Activated B cell treated with CpG ODN at 0.5 μM for 24 hours (primary cell): ENCODE measurements at regions of chr3 and their contacts with region 1.

Region 1: DNA sequence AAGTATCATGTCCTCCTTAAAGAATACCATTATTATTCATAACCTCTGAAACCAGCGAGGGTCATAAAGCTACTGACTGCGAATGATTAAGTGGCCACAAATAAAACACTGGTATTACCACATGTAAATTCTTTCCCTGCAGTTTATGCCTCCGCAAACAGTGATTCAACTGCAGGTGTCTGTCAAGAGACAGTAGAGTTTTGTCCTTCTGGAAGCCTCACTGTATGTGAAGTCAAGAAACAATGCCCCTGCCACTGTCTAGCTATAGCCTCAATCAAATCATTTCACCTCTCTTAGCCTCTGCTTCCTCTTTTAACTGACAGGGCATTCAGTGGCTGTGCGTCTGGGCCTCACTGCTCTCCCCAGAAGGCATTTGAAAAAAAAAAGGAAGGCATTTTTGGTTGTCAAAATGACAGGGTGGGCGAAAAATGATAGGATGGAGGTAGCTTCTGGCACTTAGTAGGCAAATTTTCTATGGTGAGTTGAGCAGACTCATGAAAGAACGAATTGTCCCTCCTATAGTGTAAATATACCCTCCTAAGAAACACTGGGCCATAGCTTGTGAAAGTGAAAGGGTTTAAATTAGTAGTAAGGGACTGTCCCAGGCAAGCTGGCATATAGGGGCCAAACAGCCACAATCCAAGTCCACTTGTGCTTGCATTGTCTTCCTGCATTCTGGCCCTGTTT is 66.7 kb downstream of the FILIP1L start:
- DNase-seq: no peak
- ATAC-seq: peak; percentile 72
- H3K4me3 Mint-ChIP-seq: peak overlapping the region; percentile 81
- H3K27ac Mint-ChIP-seq: peak overlapping the region; percentile 97
- H3K4me1 Mint-ChIP-seq: peaks cover 67% of the 10 kb centered on the region
- H3K27me3 Mint-ChIP-seq: no peaks in the 10 kb centered on the region
- CTCF ChIP-seq: no peak

Region 2: GRCh38 chr3:99817437-99818240 is 230.0 kb before region 1 on chr3 and contains the start of gene CMSS1:
- CTCF ChIA-PET with region 1: no interaction called
- POLR2A ChIA-PET with region 1: interaction called, 5 read pairs
- intact Hi-C with region 1: loop called (anchors 5 kb)
- DNase-seq: peak; percentile 96
- ATAC-seq: peak; percentile 94
- H3K4me3 Mint-ChIP-seq: peak within 1 kb of the TSS; percentile 97
- H3K27ac Mint-ChIP-seq: peak within 1 kb of the TSS; percentile 99
- H3K4me1 Mint-ChIP-seq: peaks cover 37% of the 10 kb centered on the region
- H3K27me3 Mint-ChIP-seq: no peaks in the 10 kb centered on the region
- CTCF ChIP-seq: no peak
- total RNA-seq, gene CMSS1: 37.4 and 41.1 TPM in 2 replicates

Region 3: DNA sequence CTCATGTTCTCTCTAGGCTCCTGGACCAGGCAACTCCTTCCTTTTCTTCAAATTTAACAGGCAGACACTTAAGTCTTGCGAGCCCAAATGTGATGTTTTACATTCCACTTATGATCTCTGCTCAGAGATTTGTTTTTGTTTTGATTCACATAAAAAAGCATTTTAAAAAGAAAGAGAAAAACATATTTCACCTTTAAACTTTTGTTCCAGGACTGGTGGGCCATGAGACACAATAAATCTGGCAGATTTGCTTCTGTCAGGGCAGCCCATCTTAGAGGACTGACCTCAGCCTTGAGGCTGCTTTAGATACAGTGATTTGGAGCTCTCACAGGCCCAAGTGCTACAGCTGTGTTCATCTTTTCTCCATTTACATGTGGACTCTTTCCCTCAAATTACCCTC is 178.0 kb before region 1 on chr3:
- CTCF ChIA-PET with region 1: no interaction called
- POLR2A ChIA-PET with region 1: no interaction called
- intact Hi-C with region 1: no loop called
- DNase-seq: no peak
- ATAC-seq: no peak
- H3K4me3 Mint-ChIP-seq: no peak overlapping the region
- H3K27ac Mint-ChIP-seq: no peak overlapping the region
- H3K4me1 Mint-ChIP-seq: peaks cover 12% of the 10 kb centered on the region
- H3K27me3 Mint-ChIP-seq: no peaks in the 10 kb centered on the region
- CTCF ChIP-seq: no peak

Region 4: DNA sequence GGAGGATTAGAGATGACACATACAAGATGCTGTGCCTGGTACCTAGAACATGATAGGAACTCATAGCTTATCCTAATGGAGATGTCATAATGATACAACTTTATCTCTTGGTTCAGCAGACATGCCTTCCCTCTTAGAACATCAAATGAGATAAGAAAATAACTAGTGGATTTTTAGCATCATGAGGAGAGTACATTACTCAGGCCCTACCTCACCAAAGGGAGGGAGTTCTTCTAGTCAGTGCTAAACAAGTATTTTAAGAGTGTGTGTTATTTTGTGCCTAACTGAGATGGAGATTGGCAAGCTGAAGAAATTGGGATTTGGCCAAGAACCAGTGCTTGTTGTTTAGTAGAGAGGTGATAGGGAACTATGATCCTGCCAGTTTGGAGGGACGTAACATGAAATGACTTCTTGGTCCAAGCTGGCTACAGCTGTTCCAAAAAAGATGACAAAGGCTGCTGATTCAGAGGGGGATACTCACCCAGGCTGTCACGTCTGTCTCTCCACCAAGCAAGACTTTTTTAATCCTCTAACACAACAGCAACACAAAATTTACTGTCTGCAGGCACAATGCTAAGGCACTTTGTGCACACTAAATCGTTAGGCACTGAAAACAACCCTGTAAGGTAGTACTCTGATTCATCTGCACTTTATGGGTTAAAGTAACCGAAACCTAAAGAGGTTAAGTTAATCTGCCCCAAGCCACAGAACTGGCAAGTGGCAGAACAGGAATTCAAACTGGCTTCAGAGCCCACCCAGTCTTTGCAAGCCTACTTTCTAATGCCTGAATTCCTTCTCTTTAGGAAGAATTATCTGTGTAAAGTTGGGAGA is 103.5 kb before region 1 on chr3:
- CTCF ChIA-PET with region 1: no interaction called
- POLR2A ChIA-PET with region 1: no interaction called
- intact Hi-C with region 1: no loop called
- DNase-seq: no peak
- ATAC-seq: no peak
- H3K4me3 Mint-ChIP-seq: no peak overlapping the region
- H3K27ac Mint-ChIP-seq: no peak overlapping the region
- H3K4me1 Mint-ChIP-seq: peaks cover 4% of the 10 kb centered on the region
- H3K27me3 Mint-ChIP-seq: no peaks in the 10 kb centered on the region
- CTCF ChIP-seq: no peak

Region 5: DNA sequence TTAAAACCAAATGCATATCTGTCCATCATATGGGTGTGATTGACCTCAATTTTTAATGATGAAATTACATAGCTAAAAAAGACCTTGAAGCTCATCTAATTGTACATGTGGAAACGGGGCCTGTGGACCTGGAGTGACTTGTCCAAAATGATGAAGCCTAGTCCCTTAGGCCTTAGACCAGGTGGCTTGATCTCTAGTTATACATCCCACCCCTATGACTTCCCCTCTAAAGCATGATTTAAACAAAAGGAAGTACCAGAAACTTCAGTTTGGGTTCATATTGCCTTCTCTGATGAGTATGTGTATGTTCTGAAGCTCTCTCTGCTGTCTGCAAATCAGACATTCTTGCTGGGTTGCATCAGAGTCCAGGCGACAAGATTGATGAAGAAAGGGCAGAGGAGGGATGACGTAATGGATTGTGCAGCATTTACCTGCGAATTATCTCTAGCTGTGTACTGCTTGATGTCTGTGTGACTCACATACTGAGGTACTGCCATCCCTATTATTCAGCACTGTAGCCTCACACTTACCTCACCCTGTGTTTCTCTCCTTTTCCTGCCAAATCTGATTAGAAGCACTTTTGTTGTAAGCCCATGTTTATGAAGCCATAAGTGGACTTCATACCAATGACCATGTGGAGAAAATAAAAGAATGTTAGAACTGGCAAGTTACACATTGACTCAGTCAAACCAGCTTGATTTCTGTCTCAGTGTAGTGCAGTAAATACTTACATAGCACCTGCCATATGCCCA is 44.8 kb before region 1 on chr3:
- CTCF ChIA-PET with region 1: no interaction called
- POLR2A ChIA-PET with region 1: no interaction called
- intact Hi-C with region 1: loop called (anchors 5 kb)
- DNase-seq: no peak
- ATAC-seq: no peak
- H3K4me3 Mint-ChIP-seq: no peak overlapping the region
- H3K27ac Mint-ChIP-seq: no peak overlapping the region
- H3K4me1 Mint-ChIP-seq: peaks cover 17% of the 10 kb centered on the region
- H3K27me3 Mint-ChIP-seq: no peaks in the 10 kb centered on the region
- CTCF ChIP-seq: no peak

Region 6: GRCh38 chr3:100103558-100104441 is 56.2 kb after region 1 on chr3:
- CTCF ChIA-PET with region 1: no interaction called
- POLR2A ChIA-PET with region 1: interaction called, 4 read pairs
- intact Hi-C with region 1: loop called (anchors 2 kb)
- DNase-seq: no peak
- ATAC-seq: peak; percentile 56
- H3K4me3 Mint-ChIP-seq: peak overlapping the region; percentile 26
- H3K27ac Mint-ChIP-seq: peak overlapping the region; percentile 57
- H3K4me1 Mint-ChIP-seq: peaks cover 49% of the 10 kb centered on the region
- H3K27me3 Mint-ChIP-seq: no peaks in the 10 kb centered on the region
- CTCF ChIP-seq: no peak

Region 7: DNA sequence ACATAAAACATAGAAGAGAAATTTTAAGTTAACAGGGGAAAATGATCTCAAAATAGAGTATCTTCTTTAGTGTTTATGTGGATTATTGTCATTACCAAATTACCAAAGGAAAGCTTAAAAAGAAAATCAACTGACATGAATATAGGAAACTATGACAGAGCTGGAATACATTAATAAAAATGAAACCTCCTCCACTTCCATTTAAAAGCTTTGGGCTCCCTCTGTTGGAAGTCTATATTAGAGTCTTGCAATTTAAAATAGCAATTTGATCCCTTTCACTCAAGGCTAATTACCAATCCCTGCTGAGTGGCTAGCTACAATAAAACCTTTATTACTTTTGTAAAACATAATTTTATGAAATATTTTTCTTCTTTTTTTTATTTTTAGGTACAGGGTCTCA is 1334.2 kb after region 1 on chr3:
- CTCF ChIA-PET with region 1: no interaction called
- POLR2A ChIA-PET with region 1: no interaction called
- intact Hi-C with region 1: loop called (anchors 10 kb)
- DNase-seq: no peak
- ATAC-seq: peak; percentile 34
- H3K4me3 Mint-ChIP-seq: no peak overlapping the region
- H3K27ac Mint-ChIP-seq: no peak overlapping the region
- H3K4me1 Mint-ChIP-seq: peaks cover 43% of the 10 kb centered on the region
- H3K27me3 Mint-ChIP-seq: no peaks in the 10 kb centered on the region
- CTCF ChIP-seq: no peak

Region 8: GRCh38 chr3:101724329-101725193 is 1677.0 kb after region 1 on chr3 and contains the start of gene CEP97:
- CTCF ChIA-PET with region 1: no interaction called
- POLR2A ChIA-PET with region 1: no interaction called
- intact Hi-C with region 1: loop called (anchors 10 kb)
- DNase-seq: peak; percentile 78
- ATAC-seq: peak; percentile 92
- H3K4me3 Mint-ChIP-seq: peak within 1 kb of the TSS; percentile 98
- H3K27ac Mint-ChIP-seq: peak within 1 kb of the TSS; percentile 97
- H3K4me1 Mint-ChIP-seq: peaks cover 40% of the 10 kb centered on the region
- H3K27me3 Mint-ChIP-seq: no peaks in the 10 kb centered on the region
- CTCF ChIP-seq: no peak
- total RNA-seq, gene CEP97: 7.3 and 7.9 TPM in 2 replicates